T-cell (primary cell): ENCODE measurements at regions of chr14 and their contacts with region 1.

Region 1: GRCh38 chr14:55270832-55271565 is at the start of gene FBXO34:
- DNase-seq: peak; percentile 94 to 100 (median 99)
- ATAC-seq: peak; percentile 89 to 95 (median 90)
- H3K4me3 ChIP-seq: peak within 1 kb of the TSS; percentile 71 to 97
- H3K4me3 Mint-ChIP-seq: peak within 1 kb of the TSS; percentile 86 to 92 (median 88)
- H3K27ac ChIP-seq: peak within 1 kb of the TSS; percentile 78
- H3K27ac Mint-ChIP-seq: peak within 1 kb of the TSS; percentile 78 to 88
- H3K4me1 ChIP-seq: peaks cover 4 to 8% of the 10 kb centered on the region in 2 experiments
- H3K4me1 Mint-ChIP-seq: peaks cover 38 to 41% (median 40%) of the 10 kb centered on the region in 3 donors
- H3K27me3 ChIP-seq: no peaks in the 10 kb centered on the region
- H3K27me3 Mint-ChIP-seq: no peaks in the 10 kb centered on the region
- total RNA-seq, gene FBXO34: 22.1 to 36.9 (median 28.7) TPM

Region 2: GRCh38 chr14:55071870-55072640 is 198.9 kb before region 1 on chr14:
- CTCF ChIA-PET with region 1: interaction called in 1 of 2 experiments, 3 read pairs
- POLR2A ChIA-PET with region 1: interaction called in 1 of 2 experiments, 10 read pairs
- DNase-seq: peak in 4 of 35 experiments; percentile 9 to 54 (median 12)
- ATAC-seq: peak; percentile 56 to 74 (median 68)
- H3K4me3 ChIP-seq: no peak overlapping the region
- H3K4me3 Mint-ChIP-seq: peak overlapping the region; percentile 53 to 63 (median 59)
- H3K27ac ChIP-seq: peak overlapping the region; percentile 64
- H3K27ac Mint-ChIP-seq: peak overlapping the region; percentile 89 to 93
- H3K4me1 ChIP-seq: peaks cover 6 to 15% of the 10 kb centered on the region in 2 experiments
- H3K4me1 Mint-ChIP-seq: peaks cover 42 to 43% (median 43%) of the 10 kb centered on the region in 3 donors
- H3K27me3 ChIP-seq: no peaks in the 10 kb centered on the region
- H3K27me3 Mint-ChIP-seq: no peaks in the 10 kb centered on the region

Region 3: GRCh38 chr14:55285048-55285652 is 14.2 kb after region 1 on chr14:
- CTCF ChIA-PET with region 1: interaction called, 9 to 13 read pairs
- POLR2A ChIA-PET with region 1: interaction called, 7 to 11 read pairs
- DNase-seq: no peak
- ATAC-seq: no peak
- H3K4me3 ChIP-seq: no peak overlapping the region
- H3K4me3 Mint-ChIP-seq: no peak overlapping the region
- H3K27ac ChIP-seq: no peak overlapping the region
- H3K27ac Mint-ChIP-seq: no peak overlapping the region
- H3K4me1 ChIP-seq: no peaks in the 10 kb centered on the region
- H3K4me1 Mint-ChIP-seq: peaks cover 34 to 61% (median 60%) of the 10 kb centered on the region in 3 donors
- H3K27me3 ChIP-seq: no peaks in the 10 kb centered on the region
- H3K27me3 Mint-ChIP-seq: no peaks in the 10 kb centered on the region

Region 4: DNA sequence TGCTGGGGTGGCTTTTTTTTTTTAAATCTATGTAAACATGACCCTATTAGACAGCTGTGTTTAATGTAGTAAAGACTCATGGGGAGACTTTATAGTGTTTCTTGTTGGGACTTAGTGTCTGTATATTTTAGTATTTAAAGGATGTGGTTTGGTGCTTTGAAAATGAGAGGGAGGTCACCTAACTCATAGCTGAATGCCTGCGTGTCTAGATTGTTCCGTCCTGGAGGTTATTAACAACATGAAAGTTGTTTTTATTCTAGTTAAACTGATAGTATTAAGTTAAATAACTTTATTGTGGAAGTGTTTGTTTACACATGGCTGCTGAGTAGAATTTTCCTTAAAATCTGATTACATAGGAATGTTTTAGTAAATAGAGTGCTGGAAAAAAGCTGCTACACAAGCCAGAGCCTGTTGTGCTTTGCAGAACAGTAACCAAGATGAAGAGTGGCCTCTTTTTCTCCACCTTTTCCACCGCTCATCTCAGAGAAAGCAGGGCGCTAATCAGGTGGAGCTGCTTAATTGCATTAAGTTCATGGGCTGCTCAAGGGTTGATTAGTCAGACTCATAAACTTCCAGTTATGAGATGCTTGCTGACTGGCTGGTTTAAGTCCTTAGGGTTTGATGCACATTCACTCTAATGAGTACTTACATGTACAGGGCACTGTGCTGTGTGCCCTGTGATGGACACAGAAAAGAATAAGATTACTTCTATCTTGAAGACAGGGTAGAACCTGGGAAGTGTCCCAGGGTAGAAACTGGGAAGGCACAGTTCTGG is 62.9 kb after region 1 on chr14:
- CTCF ChIA-PET with region 1: interaction called, 4 to 19 read pairs
- POLR2A ChIA-PET with region 1: interaction called, 8 read pairs
- DNase-seq: peak in 1 of 35 experiments; percentile 48
- ATAC-seq: peak in 2 of 4 experiments; percentile 38 to 40
- H3K4me3 ChIP-seq: peak overlapping the region in 1 of 2 donors; percentile 15
- H3K4me3 Mint-ChIP-seq: peak overlapping the region; percentile 75 to 84 (median 83)
- H3K27ac ChIP-seq: peak overlapping the region; percentile 81
- H3K27ac Mint-ChIP-seq: peak overlapping the region; percentile 94 to 97
- H3K4me1 ChIP-seq: peaks cover 47 to 54% of the 10 kb centered on the region in 2 experiments
- H3K4me1 Mint-ChIP-seq: peaks cover 82 to 88% (median 87%) of the 10 kb centered on the region in 3 donors
- H3K27me3 ChIP-seq: no peaks in the 10 kb centered on the region
- H3K27me3 Mint-ChIP-seq: no peaks in the 10 kb centered on the region